GM23248 (cell line): ENCODE measurements at regions of chr13 and their contacts with region 1.

Region 1: DNA sequence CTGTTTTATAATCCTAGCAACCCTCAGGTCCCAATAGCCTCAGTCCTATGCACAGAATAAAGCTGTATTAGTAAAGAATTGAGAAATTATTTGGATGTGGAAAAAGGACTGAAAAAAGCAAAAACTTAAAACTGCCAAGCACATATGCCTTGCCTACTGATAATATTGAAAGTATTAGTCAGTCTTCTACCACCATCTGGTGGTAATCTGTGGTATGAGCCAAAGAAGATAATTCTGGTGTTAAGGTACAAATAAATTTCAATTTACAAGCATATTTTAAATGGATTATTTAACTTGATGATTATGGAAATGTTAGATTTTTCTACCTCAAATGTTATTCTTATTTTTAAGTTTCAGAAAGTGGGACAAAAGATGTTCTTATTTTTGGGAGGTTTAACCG is 460.3 kb upstream of the KLHL1 start:
- DNase-seq: peak; percentile 46
- H3K4me3 ChIP-seq: no peak overlapping the region
- H3K27ac ChIP-seq: no peak overlapping the region
- H3K4me1 ChIP-seq: no peaks in the 10 kb centered on the region
- H3K27me3 ChIP-seq: no peaks in the 10 kb centered on the region

Region 2: GRCh38 chr13:69524459-69525155 is 1044.0 kb before region 1 on chr13:
- in situ Hi-C with region 1: loop called (anchors 25 kb)
- DNase-seq: peak; percentile 1
- H3K4me3 ChIP-seq: no peak overlapping the region
- H3K27ac ChIP-seq: no peak overlapping the region
- H3K4me1 ChIP-seq: no peaks in the 10 kb centered on the region
- H3K27me3 ChIP-seq: no peaks in the 10 kb centered on the region

Region 3: DNA sequence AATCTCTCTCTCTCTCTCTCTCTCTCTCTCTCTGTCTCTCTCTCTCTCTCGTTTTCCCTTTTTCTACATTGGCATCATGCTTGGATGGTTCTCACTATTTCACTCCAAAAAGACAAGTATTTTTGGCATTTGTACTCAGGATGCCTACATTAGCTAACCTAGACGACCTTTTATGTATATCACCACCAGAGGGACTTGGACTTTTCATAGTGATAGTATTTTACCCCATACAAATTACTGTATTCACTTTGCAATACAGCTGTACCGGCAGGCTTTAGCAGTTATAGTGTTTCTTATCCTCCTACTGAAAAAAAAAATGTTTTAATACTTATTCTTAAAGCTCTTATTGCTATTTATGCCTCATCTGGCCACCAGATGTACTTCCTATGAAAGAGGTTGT is 226.9 kb after region 1 on chr13:
- in situ Hi-C with region 1: no loop called
- DNase-seq: no peak
- H3K4me3 ChIP-seq: no peak overlapping the region
- H3K27ac ChIP-seq: no peak overlapping the region
- H3K4me1 ChIP-seq: no peaks in the 10 kb centered on the region
- H3K27me3 ChIP-seq: no peaks in the 10 kb centered on the region